ENCODE measurements at regions of chr4 and their contacts with region 1.

Region 1: GRCh38 chr4:473570-474457 is 25.1 kb downstream of the ZNF721 start:
- DNase-seq: peak; percentile 94
- H3K4me3 Mint-ChIP-seq: peak overlapping the region; percentile 94
- H3K27ac Mint-ChIP-seq: peak overlapping the region; percentile 97
- H3K4me1 Mint-ChIP-seq: peaks cover 32% of the 10 kb centered on the region
- H3K27me3 Mint-ChIP-seq: no peaks in the 10 kb centered on the region

Region 2: GRCh38 chr4:242121-242848 is 231.5 kb before region 1 on chr4:
- intact Hi-C with region 1: loop called (anchors 10 kb)
- DNase-seq: peak; percentile 61
- H3K4me3 Mint-ChIP-seq: peak overlapping the region; percentile 75
- H3K27ac Mint-ChIP-seq: peak overlapping the region; percentile 56
- H3K4me1 Mint-ChIP-seq: peaks cover 10% of the 10 kb centered on the region
- H3K27me3 Mint-ChIP-seq: no peaks in the 10 kb centered on the region

Region 3: DNA sequence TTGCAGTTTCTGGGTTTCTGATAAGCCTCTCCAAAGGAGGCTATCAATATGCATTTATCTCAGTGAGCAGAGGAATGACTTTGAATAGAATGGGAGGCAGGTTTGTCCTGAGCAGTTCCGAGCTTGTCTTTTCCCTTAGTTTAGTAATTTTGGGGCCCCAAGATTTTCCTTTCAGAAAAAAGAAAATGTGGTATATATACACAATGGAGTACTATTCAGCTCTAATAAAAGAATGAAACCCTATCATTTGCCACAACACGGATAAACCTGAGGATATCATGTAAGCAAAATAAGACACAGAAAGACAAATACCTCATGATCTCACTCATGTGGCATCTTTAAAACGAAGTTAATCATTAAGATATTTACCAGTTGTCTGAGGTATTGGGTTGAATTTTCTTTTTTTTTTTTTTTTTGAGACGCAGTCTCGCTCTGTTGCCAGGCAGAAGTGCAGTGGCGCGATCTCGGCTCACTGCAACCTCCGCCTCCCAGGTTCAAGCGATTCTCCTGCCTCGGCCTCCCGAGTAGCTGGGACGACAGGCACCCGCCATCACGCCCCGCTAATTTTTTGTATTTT is 24.6 kb after region 1 on chr4:
- intact Hi-C with region 1: loop called (anchors 1 kb)
- DNase-seq: no peak
- H3K4me3 Mint-ChIP-seq: peak overlapping the region; percentile 98
- H3K27ac Mint-ChIP-seq: peak overlapping the region; percentile 97
- H3K4me1 Mint-ChIP-seq: peaks cover 27% of the 10 kb centered on the region
- H3K27me3 Mint-ChIP-seq: no peaks in the 10 kb centered on the region

Measured in activated T-helper 2 cell treated with anti-CD3 and anti-CD28 coated beads, Interferon-gamma antibody, Interleukin-2, Interleukin-4, amounts not matched to agents 10 μg/mL and 5 μg/mL and 100 μg/mL, durations not matched to agents 14 hours and 24 hours and 36 hours (primary cell).